ENCODE measurements at regions of chr7 and their contacts with region 1.

Region 1: GRCh38 chr7:77570330-77571011 is 33.4 kb downstream of the PTPN12 start:
- DNase-seq: peak; percentile 2
- H3K4me3 ChIP-seq: no peak overlapping the region
- H3K27ac ChIP-seq: no peak overlapping the region
- H3K27me3 ChIP-seq: no peaks in the 10 kb centered on the region
- CTCF ChIP-seq: no peak

Region 2: GRCh38 chr7:75830978-75831377 is 1739.5 kb before region 1 on chr7:
- CTCF ChIA-PET with region 1: no interaction called
- POLR2A ChIA-PET with region 1: interaction called, 11 read pairs
- DNase-seq: no peak
- H3K4me3 ChIP-seq: no peak overlapping the region
- H3K27ac ChIP-seq: no peak overlapping the region
- H3K27me3 ChIP-seq: peaks cover 10% of the 10 kb centered on the region
- CTCF ChIP-seq: no peak

Measured in AG04450 (cell line).